AG04450 (cell line): ENCODE measurements at regions of chr14 and their contacts with region 1.

Region 1: GRCh38 chr14:76324133-76324532 is 51.8 kb upstream of the ESRRB start:
- DNase-seq: no peak
- H3K4me3 ChIP-seq: no peak overlapping the region
- H3K27ac ChIP-seq: no peak overlapping the region
- H3K27me3 ChIP-seq: peaks cover 14% of the 10 kb centered on the region
- CTCF ChIP-seq: no peak

Region 2: DNA sequence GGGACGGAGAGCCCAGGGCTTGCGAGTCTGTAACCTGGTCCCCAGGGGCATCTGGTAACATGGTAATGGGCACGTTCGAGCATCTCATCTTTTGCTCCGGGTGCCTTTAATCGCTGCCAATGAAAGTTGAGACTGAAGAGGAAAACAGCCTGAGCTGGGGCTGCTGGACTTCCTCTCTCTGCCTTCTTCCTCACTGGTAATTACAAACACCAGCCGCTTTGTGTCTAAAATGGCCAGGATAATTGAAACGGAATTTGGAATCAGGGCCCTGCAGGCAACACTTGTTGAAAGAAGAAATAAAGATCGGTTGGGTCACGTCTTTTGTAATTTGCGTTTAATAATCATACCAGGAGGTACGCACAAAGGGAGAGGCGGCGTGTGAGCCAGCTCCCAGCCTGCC is 223.9 kb before region 1 on chr14:
- CTCF ChIA-PET with region 1: no interaction called
- POLR2A ChIA-PET with region 1: interaction called, 10 read pairs
- DNase-seq: no peak
- H3K4me3 ChIP-seq: no peak overlapping the region
- H3K27ac ChIP-seq: no peak overlapping the region
- H3K27me3 ChIP-seq: peaks cover 19% of the 10 kb centered on the region
- CTCF ChIP-seq: no peak

Region 3: DNA sequence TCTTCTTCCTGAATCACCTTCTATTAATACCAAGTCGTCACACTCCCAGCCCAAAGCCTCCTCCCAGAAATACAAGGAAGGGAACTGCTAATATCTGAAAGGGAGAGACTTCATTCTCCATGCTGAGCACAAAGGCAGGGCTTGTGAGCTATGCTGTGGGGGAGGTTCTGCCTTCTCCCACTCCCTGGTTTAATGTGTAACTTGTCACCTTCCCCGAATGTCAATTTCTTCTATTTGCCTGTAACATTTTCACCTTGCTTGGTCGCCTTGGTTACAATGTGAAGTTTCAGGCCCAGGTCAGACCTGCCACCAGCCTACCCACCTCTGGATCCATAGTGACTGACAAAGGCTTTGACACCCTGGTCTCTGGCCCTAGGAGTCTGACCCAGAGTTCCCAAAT is 30.2 kb before region 1 on chr14:
- CTCF ChIA-PET with region 1: no interaction called
- POLR2A ChIA-PET with region 1: no interaction called
- DNase-seq: no peak
- H3K4me3 ChIP-seq: no peak overlapping the region
- H3K27ac ChIP-seq: no peak overlapping the region
- H3K27me3 ChIP-seq: peaks cover 11% of the 10 kb centered on the region
- CTCF ChIP-seq: no peak

Region 4: GRCh38 chr14:76863724-76864407 is 539.7 kb after region 1 on chr14:
- CTCF ChIA-PET with region 1: no interaction called
- POLR2A ChIA-PET with region 1: no interaction called
- DNase-seq: no peak
- H3K4me3 ChIP-seq: no peak overlapping the region
- H3K27ac ChIP-seq: no peak overlapping the region
- H3K27me3 ChIP-seq: peaks cover 38% of the 10 kb centered on the region
- CTCF ChIP-seq: no peak